Activated CD4-positive, alpha-beta T cell treated with anti-CD3 and anti-CD28 coated beads for 36 hours (primary cell): ENCODE measurements at regions of chr16 and their contacts with region 1.

Region 1: DNA sequence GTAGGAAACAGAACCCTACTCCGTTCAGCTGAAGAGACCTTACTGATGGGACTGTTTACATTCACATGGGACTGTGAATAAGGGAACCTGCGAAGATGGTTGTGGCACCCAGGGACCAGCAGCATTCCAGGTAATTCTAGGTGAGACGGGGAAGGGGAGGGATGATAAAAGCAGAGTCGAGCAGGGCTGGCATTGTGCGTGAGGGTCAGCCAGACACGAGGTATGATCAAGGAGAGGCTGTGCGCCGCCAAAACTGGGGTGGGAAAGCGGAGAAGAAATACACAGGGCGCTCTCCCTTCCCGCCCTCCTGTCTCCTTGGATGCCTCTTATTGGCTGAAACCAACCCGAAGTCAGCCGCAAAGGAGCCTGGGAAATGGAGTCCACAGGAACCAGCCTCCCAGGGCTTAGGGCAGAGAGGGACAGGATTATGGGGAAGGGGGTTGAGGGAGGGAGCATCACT is 38.4 kb upstream of the CSNK2A2 start:
- DNase-seq: peak; percentile 82
- ATAC-seq: peak; percentile 99
- H3K4me3 Mint-ChIP-seq: peak overlapping the region; percentile 69
- H3K27ac Mint-ChIP-seq: no peak overlapping the region
- H3K4me1 Mint-ChIP-seq: peaks cover 8% of the 10 kb centered on the region
- H3K27me3 Mint-ChIP-seq: peaks cover 20% of the 10 kb centered on the region

Region 2: DNA sequence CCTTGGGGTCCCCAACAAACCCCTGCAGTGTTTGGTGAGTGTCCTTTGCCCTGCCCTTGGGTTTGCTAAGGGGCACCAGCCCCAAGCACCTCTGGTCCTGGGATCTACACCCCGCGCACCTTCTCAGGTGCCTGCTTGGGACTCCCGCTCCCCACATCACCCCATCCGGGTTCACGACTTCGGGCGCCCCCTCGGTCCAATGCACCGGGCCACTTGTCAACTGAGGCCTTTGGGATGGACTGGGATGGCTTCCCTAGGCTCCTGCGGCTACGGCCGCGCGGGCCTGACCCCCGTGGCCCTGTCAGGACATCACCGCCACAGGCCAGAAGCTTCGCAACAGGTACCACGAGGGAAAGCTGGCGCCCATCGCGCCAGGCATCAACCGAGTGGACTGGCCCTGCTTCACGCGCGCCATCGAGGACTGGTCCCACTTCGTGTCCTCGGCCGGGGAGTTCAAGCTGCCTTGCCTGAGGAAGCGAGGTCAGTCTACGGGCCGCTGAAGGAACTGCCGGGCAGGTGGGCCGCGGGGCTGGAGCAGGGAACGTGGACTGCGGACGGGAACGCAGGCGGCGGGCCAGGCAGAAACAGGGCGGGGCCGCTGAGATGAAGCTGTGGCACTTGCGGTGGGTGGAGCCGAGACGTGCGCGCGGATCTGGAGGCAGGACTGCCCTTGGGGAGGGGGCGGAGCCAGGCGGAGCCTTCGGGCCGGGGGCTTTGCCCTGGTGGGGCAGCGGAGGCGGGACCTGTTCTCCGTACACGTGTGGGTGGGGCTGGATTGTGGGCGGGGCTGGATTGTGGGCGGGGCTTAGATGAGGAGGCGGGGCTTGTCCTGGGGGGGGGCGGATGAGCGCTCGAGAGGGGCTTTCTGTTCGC is 251.7 kb before region 1 on chr16:
- CTCF ChIA-PET with region 1: no interaction called
- POLR2A ChIA-PET with region 1: no interaction called
- intact Hi-C with region 1: loop called in 1 of 2 experiments (anchors 2 kb)
- DNase-seq: peak; percentile 97
- ATAC-seq: peak; percentile 100
- H3K4me3 Mint-ChIP-seq: peak overlapping the region; percentile 76
- H3K27ac Mint-ChIP-seq: no peak overlapping the region
- H3K4me1 Mint-ChIP-seq: peaks cover 7% of the 10 kb centered on the region
- H3K27me3 Mint-ChIP-seq: no peaks in the 10 kb centered on the region

Region 3: DNA sequence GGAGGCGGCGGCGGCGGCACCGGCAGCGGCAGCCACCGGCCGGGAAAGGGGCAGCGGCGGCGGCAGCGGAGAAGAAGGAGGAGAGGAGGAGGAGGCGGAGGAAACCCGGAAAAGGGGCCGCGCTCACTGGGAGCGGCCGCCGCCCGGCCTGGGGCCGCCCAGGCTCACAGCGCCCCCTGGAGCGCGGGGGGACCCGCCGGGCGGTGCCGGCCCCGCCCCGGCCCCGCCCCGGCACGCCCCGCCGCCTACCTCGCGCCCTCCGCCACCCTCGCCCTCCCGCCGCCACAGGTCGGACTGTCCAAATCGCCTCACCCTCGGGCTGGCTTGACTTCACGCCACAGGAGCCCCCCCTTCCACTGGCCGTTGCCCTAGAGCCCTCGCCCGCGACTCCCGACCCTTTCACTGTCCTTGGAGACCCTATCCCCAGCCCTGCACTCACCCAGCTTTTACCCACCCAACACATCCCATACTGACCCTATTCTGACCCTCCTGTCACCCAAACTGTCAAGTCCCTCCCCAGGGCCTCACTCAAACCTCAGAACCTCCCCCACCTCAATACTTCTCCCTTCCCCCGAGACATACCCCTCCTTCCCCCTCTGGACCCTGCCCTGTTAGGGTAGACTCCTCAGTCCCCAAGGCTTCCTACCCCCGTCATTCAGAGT is 38.1 kb before region 1 on chr16 and contains the start of gene CSNK2A2:
- CTCF ChIA-PET with region 1: no interaction called
- POLR2A ChIA-PET with region 1: no interaction called
- intact Hi-C with region 1: loop called (anchors 1 kb)
- DNase-seq: peak; percentile 84
- ATAC-seq: peak; percentile 94
- H3K4me3 Mint-ChIP-seq: peak within 1 kb of the TSS; percentile 84
- H3K27ac Mint-ChIP-seq: peak within 1 kb of the TSS; percentile 74
- H3K4me1 Mint-ChIP-seq: peaks cover 34% of the 10 kb centered on the region
- H3K27me3 Mint-ChIP-seq: peaks cover 6% of the 10 kb centered on the region
- total RNA-seq, gene CSNK2A2: 85.9 to 92.2 TPM

Region 4: GRCh38 chr16:58249780-58250478 is 13.7 kb after region 1 on chr16:
- CTCF ChIA-PET with region 1: interaction called, 3 read pairs
- POLR2A ChIA-PET with region 1: no interaction called
- intact Hi-C with region 1: loop called in 1 of 2 experiments (anchors 1 kb)
- DNase-seq: peak; percentile 92
- ATAC-seq: peak; percentile 98
- H3K4me3 Mint-ChIP-seq: peak overlapping the region; percentile 81
- H3K27ac Mint-ChIP-seq: peak overlapping the region; percentile 85
- H3K4me1 Mint-ChIP-seq: peaks cover 8% of the 10 kb centered on the region
- H3K27me3 Mint-ChIP-seq: no peaks in the 10 kb centered on the region

Region 5: GRCh38 chr16:58684354-58685083 is 448.3 kb after region 1 on chr16 and contains the start of gene SLC38A7:
- CTCF ChIA-PET with region 1: no interaction called
- POLR2A ChIA-PET with region 1: no interaction called
- intact Hi-C with region 1: loop called in 1 of 2 experiments (anchors 10 kb)
- DNase-seq: peak; percentile 88
- ATAC-seq: peak; percentile 93
- H3K4me3 Mint-ChIP-seq: peak within 1 kb of the TSS; percentile 86
- H3K27ac Mint-ChIP-seq: peak within 1 kb of the TSS; percentile 74
- H3K4me1 Mint-ChIP-seq: peaks cover 19% of the 10 kb centered on the region
- H3K27me3 Mint-ChIP-seq: no peaks in the 10 kb centered on the region
- total RNA-seq, gene SLC38A7: 4.5 to 6.5 TPM